Common myeloid progenitor, CD34-positive (primary cell): ENCODE measurements at regions of chr10 and their contacts with region 1.

Region 1: DNA sequence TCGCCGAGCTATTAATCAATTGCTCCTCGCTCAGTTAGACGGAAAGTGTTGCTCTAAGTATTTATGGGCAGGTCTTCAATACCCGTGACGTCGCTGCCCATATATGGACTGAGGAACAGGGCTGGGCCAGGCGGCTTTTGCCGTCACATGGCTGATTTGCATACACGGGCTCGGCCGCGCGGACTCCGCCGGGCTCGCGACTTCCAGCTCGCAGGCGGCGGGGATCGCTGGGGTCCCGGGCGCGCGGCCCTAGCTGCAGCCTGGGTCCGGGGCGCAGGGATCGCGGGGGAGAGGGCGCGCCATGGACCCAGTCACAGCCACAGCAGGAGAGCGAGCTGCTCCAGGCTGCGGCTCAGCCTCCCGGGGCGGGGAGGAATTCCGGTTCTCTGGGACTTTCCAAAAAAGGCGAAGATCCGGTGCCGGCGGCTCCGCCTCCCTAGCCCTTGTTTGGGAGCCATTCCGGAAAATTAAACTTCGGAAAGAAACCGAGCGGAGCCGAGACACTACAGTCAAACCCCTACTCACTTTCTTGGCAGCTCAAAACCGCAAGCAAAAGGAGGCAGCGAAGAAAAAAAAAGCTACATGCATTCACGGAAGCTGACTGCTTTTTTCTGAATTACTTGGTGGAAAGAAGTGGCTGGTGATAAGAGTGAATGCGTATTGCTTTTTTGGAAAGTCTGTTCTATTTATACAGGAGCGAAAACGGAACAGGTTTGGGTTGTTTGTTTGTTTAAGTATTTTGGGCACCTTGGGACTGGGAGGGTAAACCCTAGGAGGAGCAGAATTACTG is at the start of gene EGR2:
- DNase-seq: peak; percentile 97 to 99 (median 99)
- H3K4me3 ChIP-seq: peak within 1 kb of the TSS; percentile 65 to 91 (median 83)
- H3K27ac ChIP-seq: peak within 1 kb of the TSS in 1 of 2 experiments; percentile 66
- H3K4me1 ChIP-seq: peaks cover 0 to 41% (median 39%) of the 10 kb centered on the region in 4 experiments
- H3K27me3 ChIP-seq: peaks cover 3 to 72% (median 39%) of the 10 kb centered on the region in 5 experiments

Region 2: GRCh38 chr10:62610649-62611229 is 205.8 kb before region 1 on chr10:
- CTCF ChIA-PET with region 1: interaction called, 68 read pairs
- POLR2A ChIA-PET with region 1: no interaction called
- DNase-seq: peak; percentile 69 to 83 (median 80)
- H3K4me3 ChIP-seq: no peak overlapping the region
- H3K27ac ChIP-seq: no peak overlapping the region
- H3K4me1 ChIP-seq: no peaks in the 10 kb centered on the region
- H3K27me3 ChIP-seq: peaks cover 0 to 6% (median 0%) of the 10 kb centered on the region in 5 experiments

Region 3: GRCh38 chr10:62804356-62805230 is 11.9 kb before region 1 on chr10 and contains the start of gene ADO:
- CTCF ChIA-PET with region 1: interaction called, 32 read pairs
- POLR2A ChIA-PET with region 1: interaction called, 4 read pairs
- DNase-seq: peak; percentile 87 to 93 (median 89)
- H3K4me3 ChIP-seq: peak within 1 kb of the TSS; percentile 84 to 98 (median 85)
- H3K27ac ChIP-seq: peak within 1 kb of the TSS; percentile 95 to 97
- H3K4me1 ChIP-seq: peaks cover 8 to 26% (median 20%) of the 10 kb centered on the region in 4 experiments
- H3K27me3 ChIP-seq: peaks cover 0 to 6% (median 3%) of the 10 kb centered on the region in 5 experiments

Region 4: GRCh38 chr10:62831346-62831745 is 14.8 kb after region 1 on chr10:
- CTCF ChIA-PET with region 1: interaction called, 11 read pairs
- POLR2A ChIA-PET with region 1: no interaction called
- DNase-seq: no peak
- H3K4me3 ChIP-seq: no peak overlapping the region
- H3K27ac ChIP-seq: no peak overlapping the region
- H3K4me1 ChIP-seq: peaks cover 0 to under 1% (median 0%) of the 10 kb centered on the region in 4 experiments
- H3K27me3 ChIP-seq: no peaks in the 10 kb centered on the region

Region 5: DNA sequence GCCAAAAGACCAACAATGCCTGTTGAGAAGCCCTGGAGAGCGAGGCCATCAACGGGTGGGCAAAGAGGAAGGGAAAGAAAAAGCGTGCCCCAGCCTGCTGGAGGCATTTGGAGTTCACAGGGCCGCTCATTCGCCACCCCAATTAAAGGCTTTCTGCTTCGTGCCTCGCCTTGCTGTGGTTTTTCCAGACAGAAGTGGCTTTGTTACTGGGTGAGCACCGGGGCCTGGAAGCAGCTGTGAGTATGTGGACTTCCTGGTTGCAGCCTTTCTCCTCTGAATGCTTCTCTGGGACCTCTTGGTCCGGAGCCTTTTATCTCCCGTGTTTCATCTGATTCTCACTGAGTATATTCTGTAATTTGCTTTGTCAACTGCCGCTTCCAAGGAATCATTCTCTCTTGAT is 117.7 kb after region 1 on chr10:
- CTCF ChIA-PET with region 1: no interaction called
- POLR2A ChIA-PET with region 1: no interaction called
- DNase-seq: peak in 2 of 3 donors; percentile 29 to 41
- H3K4me3 ChIP-seq: peak overlapping the region in 1 of 7 experiments; percentile 36
- H3K27ac ChIP-seq: no peak overlapping the region
- H3K4me1 ChIP-seq: peaks cover 0 to 6% (median 4%) of the 10 kb centered on the region in 4 experiments
- H3K27me3 ChIP-seq: no peaks in the 10 kb centered on the region